ENCODE measurements at regions of chrX and their contacts with region 1.

Region 1: GRCh38 chrX:24682739-24683432 is 10.8 kb upstream of the POLA1 start:
- DNase-seq: peak; percentile 58
- H3K4me3 Mint-ChIP-seq: no peak overlapping the region
- H3K27ac Mint-ChIP-seq: peak overlapping the region; percentile 58
- H3K4me1 Mint-ChIP-seq: peaks cover 16% of the 10 kb centered on the region
- H3K27me3 Mint-ChIP-seq: peaks cover 2% of the 10 kb centered on the region

Region 2: DNA sequence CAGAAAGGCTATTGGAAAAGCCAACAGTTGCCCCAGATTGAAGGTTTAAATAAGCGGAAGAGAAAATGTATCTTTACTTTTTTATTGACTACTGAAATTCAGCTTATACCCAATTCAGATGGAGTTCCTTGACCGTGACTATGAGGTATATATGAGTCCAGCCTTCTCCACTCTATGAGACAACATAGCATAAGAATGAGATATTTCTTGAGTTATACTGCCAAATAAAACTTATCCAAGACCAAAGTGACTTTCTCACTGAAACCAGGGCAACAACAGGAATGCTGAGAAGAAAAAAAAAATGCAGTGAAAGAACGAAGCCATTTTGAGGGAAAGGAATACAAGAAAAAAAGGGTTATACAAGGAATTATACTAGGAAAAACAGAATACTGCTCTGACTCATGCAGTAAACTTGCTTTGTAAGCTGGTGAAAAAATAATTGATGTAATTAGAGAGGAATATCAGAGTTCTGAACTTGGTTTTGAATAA is 234.1 kb before region 1 on chrX:
- CTCF ChIA-PET with region 1: no interaction called
- POLR2A ChIA-PET with region 1: no interaction called
- intact Hi-C with region 1: no loop called
- DNase-seq: no peak
- H3K4me3 Mint-ChIP-seq: no peak overlapping the region
- H3K27ac Mint-ChIP-seq: no peak overlapping the region
- H3K4me1 Mint-ChIP-seq: no peaks in the 10 kb centered on the region
- H3K27me3 Mint-ChIP-seq: no peaks in the 10 kb centered on the region

Region 3: DNA sequence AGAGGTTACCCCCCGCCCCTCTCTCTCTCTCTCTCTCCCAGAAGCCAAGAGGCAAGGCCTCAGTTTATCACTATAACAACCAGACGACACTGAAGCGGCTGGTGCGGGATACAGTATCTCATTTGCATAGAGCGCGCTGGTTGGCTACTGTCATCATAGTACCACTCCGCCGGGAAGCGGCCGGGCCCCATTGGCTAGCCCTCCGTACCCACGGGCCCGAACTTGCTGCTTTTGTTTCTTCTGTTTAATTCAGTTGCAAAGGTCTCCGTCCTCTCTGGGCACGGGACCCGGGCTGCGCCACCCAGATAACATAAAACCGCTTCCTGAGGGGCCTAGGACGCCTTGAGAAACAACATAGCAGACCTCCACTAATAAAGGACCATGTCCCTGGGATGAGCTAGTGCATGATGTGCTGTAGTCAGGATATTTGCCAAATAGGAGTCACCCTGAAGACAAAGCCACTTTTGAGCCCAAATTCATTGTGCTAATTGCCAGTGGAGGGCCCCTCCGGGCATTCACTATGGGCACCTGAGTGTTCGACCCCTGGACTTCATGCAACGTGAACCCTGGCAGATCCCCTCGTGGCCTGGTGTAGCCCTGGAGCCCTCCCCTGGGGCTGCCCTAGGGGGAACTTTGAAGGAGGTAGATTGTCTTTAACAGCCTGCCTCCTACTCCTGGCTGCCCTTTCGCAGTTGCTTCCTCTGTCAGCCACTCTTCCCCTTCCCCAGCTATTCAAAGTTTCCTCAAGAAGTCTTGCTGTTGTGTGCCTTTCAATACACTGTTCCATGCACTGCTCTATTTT is 35.4 kb before region 1 on chrX and contains the start of gene PCYT1B:
- CTCF ChIA-PET with region 1: no interaction called
- POLR2A ChIA-PET with region 1: no interaction called
- intact Hi-C with region 1: loop called (anchors 5 kb)
- DNase-seq: peak; percentile 71
- H3K4me3 Mint-ChIP-seq: peak within 1 kb of the TSS; percentile 60
- H3K27ac Mint-ChIP-seq: no peak within 1 kb of the TSS
- H3K4me1 Mint-ChIP-seq: peaks cover 14% of the 10 kb centered on the region
- H3K27me3 Mint-ChIP-seq: peaks cover 12% of the 10 kb centered on the region
- total RNA-seq, gene PCYT1B: 0.14 to 0.24 TPM

Region 4: DNA sequence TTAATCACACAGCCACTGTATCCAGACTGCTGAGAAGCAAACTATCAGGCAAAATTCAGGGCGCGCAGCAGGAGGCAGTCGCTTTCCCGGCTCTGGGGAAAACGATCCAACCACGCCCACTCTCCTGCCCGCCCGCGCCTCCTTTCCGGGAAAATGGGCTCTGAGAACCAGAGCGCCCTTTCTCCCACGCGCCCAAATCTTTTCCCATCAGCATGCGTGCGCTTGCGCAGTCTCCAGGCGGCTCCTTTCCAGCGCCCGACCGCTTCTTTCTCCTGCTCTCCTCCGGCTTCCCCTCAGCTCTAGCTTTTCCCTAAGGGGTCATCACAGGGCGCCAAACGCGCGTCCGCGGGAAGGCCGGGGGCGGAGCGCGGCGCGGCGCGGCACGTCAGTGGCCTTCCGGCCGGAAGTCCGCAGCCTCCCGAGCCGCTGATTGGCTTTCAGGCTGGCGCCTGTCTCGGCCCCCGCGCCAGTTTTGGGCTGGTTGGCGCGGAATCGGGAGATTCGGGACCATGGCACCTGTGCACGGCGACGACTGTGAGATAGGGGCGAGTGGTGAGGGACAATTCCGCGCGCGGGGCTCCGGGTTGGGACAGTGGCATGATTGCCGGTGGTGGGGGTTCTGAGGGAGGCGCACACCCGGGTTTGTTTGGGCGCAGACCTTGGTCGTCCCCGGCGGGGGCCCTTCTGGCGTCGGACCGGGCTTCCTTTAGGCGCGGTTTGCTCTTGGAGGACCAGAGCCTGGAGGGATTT is 10.7 kb after region 1 on chrX and contains the start of gene POLA1:
- CTCF ChIA-PET with region 1: no interaction called
- POLR2A ChIA-PET with region 1: no interaction called
- intact Hi-C with region 1: loop called (anchors 1 kb)
- DNase-seq: peak; percentile 89
- H3K4me3 Mint-ChIP-seq: peak within 1 kb of the TSS; percentile 87
- H3K27ac Mint-ChIP-seq: peak within 1 kb of the TSS; percentile 89
- H3K4me1 Mint-ChIP-seq: peaks cover 24% of the 10 kb centered on the region
- H3K27me3 Mint-ChIP-seq: no peaks in the 10 kb centered on the region
- total RNA-seq, gene POLA1: 40.9 to 41.7 TPM